PC-9 (cell line): ENCODE measurements at regions of chr2 and their contacts with region 1.

Region 1: DNA sequence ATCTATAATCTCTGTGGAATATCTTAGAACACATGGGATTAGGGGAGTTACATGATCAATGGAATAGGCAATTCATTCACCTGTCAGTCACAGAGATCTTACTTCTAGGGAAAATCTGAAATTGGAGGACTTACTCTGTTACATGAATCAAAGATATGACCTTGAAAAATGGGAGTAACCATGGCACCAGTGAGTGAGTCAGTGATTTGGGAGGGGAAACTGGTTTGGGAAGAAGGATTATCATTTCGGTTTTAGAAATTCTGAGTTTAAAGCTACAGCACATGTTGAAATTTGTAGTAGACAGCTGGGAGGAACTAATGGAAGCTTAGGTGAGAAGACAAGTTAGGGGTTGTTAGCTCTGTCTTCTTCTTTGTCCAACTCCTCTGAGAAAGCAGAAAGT is 153.7 kb downstream of the CAMKMT start:
- DNase-seq: peak in 1 of 2 experiments; percentile 68
- H3K4me3 ChIP-seq: no peak overlapping the region
- H3K27ac ChIP-seq: no peak overlapping the region
- H3K4me1 ChIP-seq: peaks cover 17% of the 10 kb centered on the region
- H3K27me3 ChIP-seq: no peaks in the 10 kb centered on the region
- CTCF ChIP-seq: no peak

Region 2: DNA sequence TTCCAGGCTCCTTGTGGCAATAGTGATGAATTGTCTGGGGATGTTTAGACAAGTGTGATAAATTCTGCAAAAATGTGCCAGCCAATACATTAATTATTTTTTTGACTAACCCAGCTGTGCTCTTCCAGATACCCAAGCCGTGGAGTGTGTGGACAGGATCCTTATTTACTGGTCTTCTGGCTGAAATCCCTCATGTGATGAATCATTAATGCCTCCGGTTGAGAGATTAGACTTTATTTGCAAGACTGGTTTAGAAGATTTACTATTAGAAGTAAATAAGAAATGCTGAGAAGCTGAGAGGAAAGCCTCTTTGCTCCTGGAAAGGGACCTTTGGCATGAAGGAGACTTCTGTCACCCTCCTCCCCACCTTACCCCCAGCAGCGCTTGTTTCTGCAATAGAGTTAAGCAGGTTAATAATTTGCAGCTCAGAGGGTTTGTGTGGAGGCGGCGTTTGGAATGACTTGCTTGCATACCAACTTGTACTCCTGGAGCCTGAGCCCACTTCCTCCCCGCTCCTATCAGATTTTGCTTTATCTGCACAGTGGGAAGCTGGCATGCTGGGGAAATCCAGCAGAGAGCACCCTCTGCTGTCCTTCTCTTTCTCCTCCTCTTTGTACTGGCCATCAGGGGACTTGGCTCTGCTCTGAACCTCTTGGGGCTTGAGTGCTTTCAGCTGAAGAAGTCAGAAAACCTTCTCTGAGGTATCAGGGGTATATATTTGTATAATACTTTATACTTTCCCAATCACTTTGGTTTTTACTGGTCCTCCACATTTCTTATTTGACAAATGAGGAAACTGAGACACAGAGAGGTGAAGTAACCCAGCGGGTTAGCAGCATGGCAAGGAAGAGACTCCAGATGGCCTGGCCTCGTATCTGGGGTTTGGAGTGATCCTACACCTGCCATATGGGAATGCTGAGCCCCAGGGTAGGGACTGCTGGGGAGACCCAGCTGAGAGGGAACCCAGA is 223.9 kb before region 1 on chr2:
- CTCF ChIA-PET with region 1: interaction called, 10 read pairs
- POLR2A ChIA-PET with region 1: no interaction called
- intact Hi-C with region 1: no loop called
- DNase-seq: peak; percentile 71 to 97
- H3K4me3 ChIP-seq: peak overlapping the region; percentile 5; the same call in 1 of the 2 replicates
- H3K27ac ChIP-seq: peak overlapping the region; percentile 49
- H3K4me1 ChIP-seq: peaks cover 30% of the 10 kb centered on the region
- H3K27me3 ChIP-seq: no peaks in the 10 kb centered on the region
- CTCF ChIP-seq: peak; percentile 76